HEK293T (cell line): ENCODE measurements at regions of chr14 and their contacts with region 1.

Region 1: GRCh38 chr14:53953002-53953827 is 3.4 kb downstream of the BMP4 start:
- DNase-seq: peak; percentile 86

Region 2: GRCh38 chr14:53247596-53248370 is 705.4 kb before region 1 on chr14:
- CTCF ChIA-PET with region 1: no interaction called
- POLR2A ChIA-PET with region 1: no interaction called
- DNase-seq: no peak

Region 3: DNA sequence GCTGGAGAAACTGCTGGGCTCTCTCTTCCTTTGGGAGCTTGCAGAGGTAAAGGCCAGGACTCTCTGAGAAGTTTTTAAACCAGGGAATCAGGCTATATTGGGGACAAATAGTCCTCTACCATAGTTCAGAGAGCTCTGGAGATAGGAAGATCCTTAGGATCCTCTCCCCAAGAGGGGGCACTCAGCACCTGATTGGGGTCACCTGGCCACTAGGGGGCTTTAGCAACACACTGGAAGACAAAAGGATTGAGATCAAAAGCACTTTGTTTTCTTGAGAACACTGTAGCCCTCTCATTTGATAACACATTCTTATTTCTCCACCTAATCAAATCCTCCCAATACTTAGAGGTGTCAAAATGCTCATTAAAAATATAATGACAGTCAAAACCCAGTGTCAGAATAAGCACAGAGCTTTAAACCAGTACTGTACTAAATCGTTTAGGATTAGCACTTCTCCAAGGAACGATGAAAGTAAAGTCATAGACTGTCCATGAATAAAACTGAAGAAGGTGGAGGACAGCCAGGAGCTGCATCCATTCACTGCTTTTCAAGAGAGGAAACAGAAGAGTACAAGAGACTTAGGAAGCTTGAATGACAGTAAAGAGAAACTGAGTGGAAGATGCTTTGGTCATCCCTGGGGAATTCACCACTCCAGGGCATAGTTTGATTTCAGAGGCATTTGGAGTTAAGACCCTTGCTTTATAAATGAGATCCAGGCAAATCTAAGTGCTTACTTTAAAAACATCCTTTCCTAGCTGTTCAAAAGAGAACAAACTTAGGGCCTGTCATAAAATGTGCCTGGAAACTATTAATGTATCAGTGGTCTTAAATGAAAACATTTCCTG is 23.1 kb before region 1 on chr14:
- CTCF ChIA-PET with region 1: interaction called, 4 read pairs
- POLR2A ChIA-PET with region 1: interaction called, 11 read pairs
- DNase-seq: no peak

Region 4: GRCh38 chr14:53943048-53943750 is 10.0 kb before region 1 on chr14:
- CTCF ChIA-PET with region 1: interaction called, 3 read pairs
- POLR2A ChIA-PET with region 1: interaction called, 20 read pairs
- DNase-seq: no peak

Region 5: GRCh38 chr14:54001189-54001913 is 48.1 kb after region 1 on chr14:
- CTCF ChIA-PET with region 1: interaction called, 5 read pairs
- POLR2A ChIA-PET with region 1: interaction called, 13 read pairs
- DNase-seq: no peak